Activated CD4-positive, alpha-beta memory T cell treated with anti-CD3 and anti-CD28 coated beads for 36 hours (primary cell): ENCODE measurements at regions of chr1 and their contacts with region 1.

Region 1: GRCh38 chr1:35298464-35298863 is 30.0 kb downstream of the ZMYM4 start:
- DNase-seq: peak; percentile 19
- H3K4me3 Mint-ChIP-seq: no peak overlapping the region
- H3K27ac Mint-ChIP-seq: no peak overlapping the region
- H3K4me1 Mint-ChIP-seq: peaks cover 4% of the 10 kb centered on the region
- H3K27me3 Mint-ChIP-seq: no peaks in the 10 kb centered on the region

Region 2: GRCh38 chr1:35202048-35202719 is 96.3 kb before region 1 on chr1:
- CTCF ChIA-PET with region 1: interaction called, 20 read pairs
- POLR2A ChIA-PET with region 1: no interaction called
- intact Hi-C with region 1: loop called (anchors 1 kb)
- DNase-seq: peak; percentile 79
- H3K4me3 Mint-ChIP-seq: no peak overlapping the region
- H3K27ac Mint-ChIP-seq: no peak overlapping the region
- H3K4me1 Mint-ChIP-seq: peaks cover 7% of the 10 kb centered on the region
- H3K27me3 Mint-ChIP-seq: no peaks in the 10 kb centered on the region

Region 3: DNA sequence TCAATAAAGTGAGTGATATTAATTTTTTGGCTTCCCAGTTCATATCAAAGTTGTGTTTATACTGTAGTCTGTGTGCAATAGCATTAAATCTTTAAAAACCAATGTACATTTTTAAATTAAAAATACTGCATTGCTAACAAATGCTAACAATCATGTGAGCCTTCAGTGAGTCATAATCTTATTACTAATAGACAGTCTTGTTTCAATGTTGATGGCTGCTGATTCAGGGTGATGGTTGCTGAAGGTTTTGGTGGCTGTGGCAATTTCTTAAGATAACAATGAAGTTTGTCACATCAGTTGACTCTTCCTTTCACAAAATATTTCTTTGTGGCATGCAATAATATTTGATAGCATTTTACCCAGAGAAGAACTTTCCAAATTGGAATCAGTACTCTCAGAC is 79.1 kb after region 1 on chr1:
- CTCF ChIA-PET with region 1: no interaction called
- POLR2A ChIA-PET with region 1: no interaction called
- intact Hi-C with region 1: no loop called
- DNase-seq: no peak
- H3K4me3 Mint-ChIP-seq: no peak overlapping the region
- H3K27ac Mint-ChIP-seq: no peak overlapping the region
- H3K4me1 Mint-ChIP-seq: no peaks in the 10 kb centered on the region
- H3K27me3 Mint-ChIP-seq: no peaks in the 10 kb centered on the region